CD4-positive, alpha-beta memory T cell (primary cell): ENCODE measurements at regions of chr16 and their contacts with region 1.

Region 1: GRCh38 chr16:74606521-74607310 is at the start of gene GLG1:
- DNase-seq: peak; percentile 89 to 92 (median 91)
- H3K4me3 ChIP-seq: peak within 1 kb of the TSS; percentile 52 to 91
- H3K4me3 Mint-ChIP-seq: peak within 1 kb of the TSS; percentile 89 to 99 (median 96)
- H3K27ac ChIP-seq: peak within 1 kb of the TSS; percentile 95
- H3K27ac Mint-ChIP-seq: peak within 1 kb of the TSS; percentile 82 to 99 (median 95)
- H3K4me1 ChIP-seq: peaks cover 77% of the 10 kb centered on the region
- H3K4me1 Mint-ChIP-seq: peaks cover 48 to 76% (median 61%) of the 10 kb centered on the region in 4 donors
- H3K27me3 ChIP-seq: no peaks in the 10 kb centered on the region
- H3K27me3 Mint-ChIP-seq: no peaks in the 10 kb centered on the region
- total RNA-seq, gene GLG1: 173 to 176 TPM

Region 2: DNA sequence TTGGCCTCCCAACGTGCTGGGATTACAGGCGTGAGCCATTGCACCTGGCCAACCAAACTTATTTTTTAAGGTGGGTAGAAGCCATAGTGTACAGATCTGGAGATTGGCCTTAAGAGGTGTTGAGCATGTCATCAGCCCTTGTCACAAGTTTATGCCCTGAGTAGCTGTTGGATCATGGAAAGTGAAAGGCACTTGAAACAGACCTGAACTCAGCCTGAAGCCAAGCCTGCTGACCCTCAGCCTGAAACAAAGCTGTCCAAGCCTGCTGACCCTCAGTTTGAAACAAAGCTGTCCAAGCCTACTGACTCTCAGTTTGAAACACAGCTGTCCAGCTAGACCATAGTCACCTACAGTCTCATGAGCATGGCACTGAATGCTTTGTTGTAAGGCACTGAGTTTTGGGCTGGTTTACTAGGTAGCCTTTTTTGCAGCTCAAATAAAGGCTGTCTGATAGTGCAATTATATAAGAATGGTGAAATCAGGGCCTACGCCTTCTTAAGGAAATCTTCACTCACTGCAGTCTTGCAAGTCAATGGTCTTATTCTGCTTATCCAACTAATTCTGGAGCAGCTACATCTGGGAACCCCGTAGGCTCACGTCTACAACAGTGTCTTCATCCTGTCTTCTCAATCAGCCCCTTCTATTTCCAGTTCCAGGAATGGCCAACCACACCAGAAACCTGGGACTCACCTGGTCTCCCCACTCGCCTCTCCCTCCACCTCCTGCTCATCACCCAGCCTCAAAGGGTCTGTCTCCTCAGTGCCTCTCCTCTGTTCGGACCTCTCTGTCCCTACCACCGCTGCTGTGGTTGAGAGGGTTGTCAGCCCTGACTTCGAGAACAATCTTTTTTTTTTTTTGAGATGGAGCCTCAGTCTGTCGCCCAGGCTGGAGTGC is 233.5 kb before region 1 on chr16:
- CTCF ChIA-PET with region 1: no interaction called
- POLR2A ChIA-PET with region 1: interaction called, 3 read pairs
- intact Hi-C with region 1: loop called (anchors 2 kb)
- DNase-seq: no peak
- H3K4me3 ChIP-seq: no peak overlapping the region
- H3K4me3 Mint-ChIP-seq: no peak overlapping the region
- H3K27ac ChIP-seq: no peak overlapping the region
- H3K27ac Mint-ChIP-seq: peak overlapping the region in 4 of 7 donors; percentile 5 to 52 (median 31)
- H3K4me1 ChIP-seq: no peaks in the 10 kb centered on the region
- H3K4me1 Mint-ChIP-seq: peaks cover 0 to 4% (median 2%) of the 10 kb centered on the region in 4 donors
- H3K27me3 ChIP-seq: no peaks in the 10 kb centered on the region
- H3K27me3 Mint-ChIP-seq: no peaks in the 10 kb centered on the region

Region 3: GRCh38 chr16:74623214-74623842 is 16.6 kb after region 1 on chr16:
- CTCF ChIA-PET with region 1: interaction called, 22 read pairs
- POLR2A ChIA-PET with region 1: interaction called, 14 read pairs
- intact Hi-C with region 1: no loop called
- DNase-seq: peak in 4 of 5 donors; percentile 47 to 54 (median 52)
- H3K4me3 ChIP-seq: no peak overlapping the region
- H3K4me3 Mint-ChIP-seq: no peak overlapping the region
- H3K27ac ChIP-seq: no peak overlapping the region
- H3K27ac Mint-ChIP-seq: peak overlapping the region in 5 of 7 donors; percentile 48 to 80 (median 54)
- H3K4me1 ChIP-seq: no peaks in the 10 kb centered on the region
- H3K4me1 Mint-ChIP-seq: peaks cover 4 to 8% (median 6%) of the 10 kb centered on the region in 4 donors
- H3K27me3 ChIP-seq: no peaks in the 10 kb centered on the region
- H3K27me3 Mint-ChIP-seq: no peaks in the 10 kb centered on the region

Region 4: DNA sequence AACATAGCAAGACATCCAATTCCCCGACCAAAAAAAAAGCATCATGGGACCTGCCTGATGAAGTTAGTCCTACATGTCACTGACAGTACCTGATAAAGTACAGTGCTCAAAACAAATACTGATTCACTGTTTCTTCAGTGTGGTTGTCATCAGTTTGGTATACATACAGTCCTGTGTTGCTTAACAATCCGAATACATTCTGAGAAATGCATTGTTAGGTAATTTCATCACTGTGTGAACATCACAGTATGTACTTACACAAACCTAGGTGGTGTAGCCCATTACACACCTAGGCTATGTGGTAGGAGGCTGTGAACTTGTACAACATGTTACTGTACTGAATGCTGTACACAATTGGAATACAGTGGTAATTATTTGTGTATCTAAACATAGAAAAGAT is 186.9 kb after region 1 on chr16:
- CTCF ChIA-PET with region 1: no interaction called
- POLR2A ChIA-PET with region 1: no interaction called
- intact Hi-C with region 1: no loop called
- DNase-seq: no peak
- H3K4me3 ChIP-seq: no peak overlapping the region
- H3K4me3 Mint-ChIP-seq: no peak overlapping the region
- H3K27ac ChIP-seq: no peak overlapping the region
- H3K27ac Mint-ChIP-seq: no peak overlapping the region
- H3K4me1 ChIP-seq: no peaks in the 10 kb centered on the region
- H3K4me1 Mint-ChIP-seq: no peaks in the 10 kb centered on the region
- H3K27me3 ChIP-seq: no peaks in the 10 kb centered on the region
- H3K27me3 Mint-ChIP-seq: peaks cover 19 to 32% of the 10 kb centered on the region in 2 donors

Region 5: DNA sequence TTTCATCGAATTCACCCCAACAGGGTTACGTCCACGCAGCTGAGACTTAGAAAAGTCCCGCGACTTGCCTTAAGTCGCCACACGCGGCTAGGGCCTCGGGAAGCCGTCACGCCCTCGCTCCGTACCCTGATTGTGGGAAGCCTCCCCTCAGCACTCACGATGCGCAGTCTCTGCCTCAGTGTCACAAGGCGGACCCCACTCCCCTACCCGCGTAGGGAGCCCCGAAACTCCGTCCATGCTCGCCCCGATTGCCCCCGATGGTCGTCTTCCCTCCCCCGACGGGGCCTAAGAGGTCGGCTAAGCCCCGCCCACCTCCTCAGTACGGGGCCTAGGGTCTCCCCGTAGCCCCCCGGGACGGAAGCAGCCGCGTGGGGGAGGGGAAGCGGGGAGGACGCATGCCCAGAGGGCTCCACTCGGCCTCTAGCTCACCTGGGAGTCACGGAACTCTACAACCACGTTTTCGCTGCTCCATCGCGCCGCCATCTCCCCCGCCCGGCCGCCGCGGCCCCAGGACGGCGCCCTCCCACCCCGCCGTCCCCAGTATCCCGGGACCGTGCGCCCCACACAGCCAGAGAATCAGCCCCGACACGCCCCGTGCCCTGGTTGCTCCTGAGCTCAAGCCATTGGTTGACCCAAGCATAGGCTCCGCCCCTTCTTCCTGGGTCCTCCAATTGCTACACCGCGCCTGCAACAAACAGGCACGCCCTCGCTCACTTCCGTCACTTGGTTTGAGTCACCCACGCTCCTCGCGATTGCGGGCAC is 378.0 kb after region 1 on chr16 and contains the start of gene WDR59:
- CTCF ChIA-PET with region 1: no interaction called
- POLR2A ChIA-PET with region 1: interaction called, 5 read pairs
- intact Hi-C with region 1: loop called (anchors 1 kb)
- DNase-seq: peak; percentile 97 to 100 (median 99)
- H3K4me3 ChIP-seq: peak within 1 kb of the TSS; percentile 90 to 96
- H3K4me3 Mint-ChIP-seq: peak within 1 kb of the TSS; percentile 93 to 98 (median 96)
- H3K27ac ChIP-seq: peak within 1 kb of the TSS; percentile 87
- H3K27ac Mint-ChIP-seq: peak within 1 kb of the TSS; percentile 84 to 99 (median 95)
- H3K4me1 ChIP-seq: peaks cover 18% of the 10 kb centered on the region
- H3K4me1 Mint-ChIP-seq: peaks cover 8 to 29% (median 19%) of the 10 kb centered on the region in 4 donors
- H3K27me3 ChIP-seq: no peaks in the 10 kb centered on the region
- H3K27me3 Mint-ChIP-seq: no peaks in the 10 kb centered on the region
- total RNA-seq, gene WDR59: 116 to 127 TPM

Region 6: GRCh38 chr16:75566040-75566810 is 959.5 kb after region 1 on chr16 and contains the start of gene GABARAPL2:
- CTCF ChIA-PET with region 1: no interaction called
- POLR2A ChIA-PET with region 1: no interaction called
- intact Hi-C with region 1: loop called (anchors 10 kb)
- DNase-seq: peak; percentile 87 to 95 (median 91)
- H3K4me3 ChIP-seq: peak within 1 kb of the TSS; percentile 68 to 100
- H3K4me3 Mint-ChIP-seq: peak within 1 kb of the TSS; percentile 89 to 100 (median 97)
- H3K27ac ChIP-seq: peak within 1 kb of the TSS; percentile 82
- H3K27ac Mint-ChIP-seq: peak within 1 kb of the TSS; percentile 84 to 100 (median 97)
- H3K4me1 ChIP-seq: peaks cover 48% of the 10 kb centered on the region
- H3K4me1 Mint-ChIP-seq: peaks cover 26 to 57% (median 38%) of the 10 kb centered on the region in 4 donors
- H3K27me3 ChIP-seq: no peaks in the 10 kb centered on the region
- H3K27me3 Mint-ChIP-seq: peaks cover 0 to 7% of the 10 kb centered on the region in 2 donors
- total RNA-seq, gene GABARAPL2: 91.9 to 100 TPM